Prostate gland (tissue), 2 donors: ENCODE measurements at regions of chr19 and their contacts with region 1.

Region 1: DNA sequence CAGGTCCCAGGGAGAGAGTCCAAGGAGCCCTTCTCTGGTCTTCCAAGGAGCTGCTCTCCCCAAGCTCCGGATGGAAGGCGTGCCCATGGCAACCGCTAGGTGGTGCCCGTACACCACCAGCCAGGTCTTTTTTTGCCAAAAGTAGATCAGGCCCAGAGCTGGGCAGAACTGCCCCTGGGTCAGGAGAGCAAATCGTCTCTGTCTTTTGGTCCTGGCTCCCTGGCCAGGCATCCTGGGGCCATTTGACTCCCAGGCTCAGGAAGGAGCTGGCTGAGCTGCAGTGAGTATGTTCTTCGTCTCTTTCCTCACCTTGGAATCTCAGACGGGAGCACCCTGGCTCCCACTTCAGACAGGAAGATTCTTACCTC is 24.6 kb upstream of the BCL3 start:
- DNase-seq: peak; percentile 76
- H3K4me3 ChIP-seq: no peak overlapping the region
- H3K27ac ChIP-seq: no peak overlapping the region
- H3K4me1 ChIP-seq: no peaks in the 10 kb centered on the region
- H3K27me3 ChIP-seq: no peaks in the 10 kb centered on the region
- CTCF ChIP-seq: peak; percentile 97 to 99 (median 98)
- POLR2A ChIP-seq: no peak

Region 2: DNA sequence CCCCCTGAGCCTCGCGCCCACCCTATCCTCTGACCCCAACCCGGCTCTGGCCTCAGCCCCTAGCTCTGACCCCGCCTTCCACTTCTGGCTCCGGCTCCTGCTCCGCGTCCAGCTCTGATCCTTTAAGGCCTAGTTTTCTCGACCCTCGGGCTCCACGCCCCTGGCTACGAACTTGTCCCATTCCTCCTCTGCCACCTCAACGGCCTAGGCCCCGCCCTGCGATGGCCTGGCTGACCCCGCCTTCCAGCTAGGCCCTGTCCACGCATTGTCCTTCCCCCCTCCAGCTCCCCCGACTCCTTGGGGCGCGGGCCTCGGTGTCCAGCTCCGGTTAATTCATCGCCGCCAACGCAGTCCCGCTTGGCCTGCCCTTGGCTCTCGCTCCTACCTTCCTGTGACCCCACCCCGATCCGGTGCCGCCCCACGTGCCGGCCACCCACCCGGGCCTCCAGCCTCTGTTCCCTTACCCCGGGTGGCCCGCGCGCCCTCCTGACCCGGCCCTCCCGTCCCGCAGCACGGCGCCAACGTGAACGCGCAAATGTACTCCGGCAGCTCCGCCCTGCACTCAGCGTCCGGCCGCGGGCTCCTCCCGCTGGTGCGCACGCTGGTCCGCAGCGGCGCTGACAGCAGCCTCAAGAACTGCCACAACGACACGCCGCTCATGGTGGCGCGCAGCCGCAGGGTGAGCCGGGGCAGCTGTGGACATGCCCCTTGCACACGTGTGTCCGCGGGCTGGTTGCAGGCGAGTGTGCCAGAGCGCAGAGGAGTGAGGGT is 34.0 kb after region 1 on chr19:
- intact Hi-C with region 1: loop called (anchors 1 kb)
- DNase-seq: no peak
- H3K4me3 ChIP-seq: peak overlapping the region; percentile 23 to 25
- H3K27ac ChIP-seq: peak overlapping the region; percentile 46 to 96
- H3K4me1 ChIP-seq: peaks cover 31% of the 10 kb centered on the region
- H3K27me3 ChIP-seq: no peaks in the 10 kb centered on the region
- CTCF ChIP-seq: peak in 3 of 4 experiments; percentile 23 to 41 (median 36)
- POLR2A ChIP-seq: no peak

Region 3: GRCh38 chr19:44770550-44771257 is 46.8 kb after region 1 on chr19:
- intact Hi-C with region 1: loop called (anchors 1 kb)
- DNase-seq: peak; percentile 97
- H3K4me3 ChIP-seq: no peak overlapping the region
- H3K27ac ChIP-seq: no peak overlapping the region
- H3K4me1 ChIP-seq: no peaks in the 10 kb centered on the region
- H3K27me3 ChIP-seq: no peaks in the 10 kb centered on the region
- CTCF ChIP-seq: peak; percentile 73 to 97 (median 94)
- POLR2A ChIP-seq: no peak

Region 4: GRCh38 chr19:45276284-45276687 is 552.4 kb after region 1 on chr19:
- intact Hi-C with region 1: no loop called
- DNase-seq: no peak
- H3K4me3 ChIP-seq: no peak overlapping the region
- H3K27ac ChIP-seq: no peak overlapping the region
- H3K4me1 ChIP-seq: no peaks in the 10 kb centered on the region
- H3K27me3 ChIP-seq: no peaks in the 10 kb centered on the region
- CTCF ChIP-seq: no peak
- POLR2A ChIP-seq: no peak